ENCODE measurements at regions of chr6 and their contacts with region 1.

Region 1: DNA sequence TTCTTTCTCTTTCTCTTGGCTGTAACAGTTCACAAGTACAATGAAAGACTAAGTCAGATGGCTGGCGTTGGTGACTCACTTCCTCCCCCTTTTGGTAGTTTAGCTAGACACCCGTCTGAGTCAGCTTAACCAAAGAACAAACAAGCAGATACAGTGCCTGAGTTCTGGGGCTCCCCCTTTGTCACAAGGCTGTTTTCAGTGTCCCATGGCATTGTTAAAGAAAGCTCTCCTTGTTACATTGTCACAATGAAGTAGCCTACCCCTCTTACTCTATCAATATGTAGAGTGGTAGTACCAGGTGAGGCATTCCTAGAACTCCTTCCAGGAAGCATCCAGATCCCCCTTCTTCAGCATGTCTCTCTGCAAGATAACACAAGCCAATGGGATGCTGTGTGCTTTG is 38.6 kb downstream of the KIAA0408 start:
- DNase-seq: peak; percentile 94
- ATAC-seq: peak; percentile 99
- H3K4me3 Mint-ChIP-seq: peak overlapping the region; percentile 7
- H3K27ac Mint-ChIP-seq: peak overlapping the region; percentile 83
- H3K4me1 Mint-ChIP-seq: peaks cover 22% of the 10 kb centered on the region
- H3K27me3 Mint-ChIP-seq: peaks cover 4% of the 10 kb centered on the region
- CTCF ChIP-seq: no peak

Region 2: DNA sequence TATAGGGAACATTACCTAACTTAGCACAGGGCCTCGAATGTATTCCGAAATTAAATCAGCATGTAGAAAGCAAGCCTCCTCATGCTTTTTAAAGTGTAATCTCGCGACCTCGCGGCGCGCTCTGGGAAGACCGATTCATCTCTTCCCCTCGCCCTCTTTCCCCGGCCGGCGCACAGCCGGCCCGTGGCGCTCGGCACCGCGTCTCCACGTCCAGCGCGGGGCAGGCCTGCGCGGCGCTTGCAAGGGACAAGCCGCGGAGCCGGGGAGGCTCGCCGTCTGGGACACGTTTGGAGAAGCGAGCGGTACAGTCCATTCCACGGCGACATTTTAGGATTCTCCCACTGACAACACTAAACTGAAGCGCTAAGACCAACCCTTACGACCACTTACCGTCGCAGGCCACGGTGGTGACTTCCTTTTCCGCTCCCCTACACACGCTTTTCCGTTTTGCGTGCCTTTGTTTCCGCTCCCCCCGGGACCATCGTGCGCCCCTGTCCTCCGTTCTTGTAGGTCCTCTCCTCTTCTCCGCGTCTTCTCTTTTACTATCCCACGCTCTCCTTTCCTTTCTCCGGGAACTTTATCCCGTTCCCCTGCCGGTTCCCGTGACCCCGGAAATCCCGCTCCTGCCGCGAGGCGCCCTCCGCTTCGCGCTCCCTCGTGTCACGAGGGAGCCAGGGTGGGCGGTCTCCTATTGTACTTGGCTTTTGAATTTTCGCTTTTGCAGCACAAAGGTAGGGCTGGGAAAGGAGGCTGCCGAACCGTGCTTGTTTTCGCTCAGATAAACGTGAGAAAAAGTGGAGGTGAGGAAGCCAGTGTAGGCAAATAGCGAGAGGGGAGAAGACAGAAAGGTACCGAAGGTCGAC is 77.4 kb before region 1 on chr6 and contains the start of gene ECHDC1:
- CTCF ChIA-PET with region 1: no interaction called
- POLR2A ChIA-PET with region 1: interaction called, 5 read pairs
- intact Hi-C with region 1: loop called (anchors 5 kb)
- DNase-seq: peak; percentile 86
- ATAC-seq: peak; percentile 90
- H3K4me3 Mint-ChIP-seq: no peak within 1 kb of the TSS
- H3K27ac Mint-ChIP-seq: no peak within 1 kb of the TSS
- H3K4me1 Mint-ChIP-seq: peaks cover 12% of the 10 kb centered on the region
- H3K27me3 Mint-ChIP-seq: no peaks in the 10 kb centered on the region
- CTCF ChIP-seq: no peak
- total RNA-seq, gene ECHDC1: 50.2 to 51.1 TPM

Region 3: GRCh38 chr6:127484212-127484858 is 63.8 kb after region 1 on chr6:
- CTCF ChIA-PET with region 1: interaction called, 3 read pairs
- POLR2A ChIA-PET with region 1: no interaction called
- intact Hi-C with region 1: loop called (anchors 2 kb)
- DNase-seq: peak; percentile 10
- ATAC-seq: peak; percentile 91
- H3K4me3 Mint-ChIP-seq: peak overlapping the region; percentile 40
- H3K27ac Mint-ChIP-seq: peak overlapping the region; percentile 83
- H3K4me1 Mint-ChIP-seq: peaks cover 31% of the 10 kb centered on the region
- H3K27me3 Mint-ChIP-seq: peaks cover 4% of the 10 kb centered on the region
- CTCF ChIP-seq: no peak